HepG2 (cell line): ENCODE measurements at regions of chr10 and their contacts with region 1.

Region 1: GRCh38 chr10:122126763-122127659 is 138.0 kb downstream of the TACC2 start:
- DNase-seq: peak; percentile 30
- ATAC-seq: peak; percentile 56
- H3K4me3 ChIP-seq: no peak overlapping the region
- H3K27ac ChIP-seq: no peak overlapping the region
- H3K4me1 ChIP-seq: peaks cover 14% of the 10 kb centered on the region
- H3K27me3 ChIP-seq: no peaks in the 10 kb centered on the region; a peak in 1 of 5 replicates
- CTCF ChIP-seq: no peak
- EP300 ChIP-seq: no peak
- POLR2A ChIP-seq: no peak
- RAD21 ChIP-seq: no peak

Region 2: GRCh38 chr10:122152544-122152943 is 25.5 kb after region 1 on chr10:
- CTCF ChIA-PET with region 1: no interaction called
- POLR2A ChIA-PET with region 1: no interaction called
- in situ Hi-C with region 1: no loop called
- intact Hi-C with region 1: no loop called
- DNase-seq: no peak
- ATAC-seq: no peak
- H3K4me3 ChIP-seq: no peak overlapping the region
- H3K27ac ChIP-seq: no peak overlapping the region
- H3K4me1 ChIP-seq: peaks cover 2% of the 10 kb centered on the region
- H3K27me3 ChIP-seq: no peaks in the 10 kb centered on the region
- CTCF ChIP-seq: no peak
- EP300 ChIP-seq: no peak
- POLR2A ChIP-seq: no peak
- RAD21 ChIP-seq: no peak

Region 3: GRCh38 chr10:122191936-122192541 is 65.0 kb after region 1 on chr10:
- CTCF ChIA-PET with region 1: no interaction called
- POLR2A ChIA-PET with region 1: no interaction called
- in situ Hi-C with region 1: no loop called
- intact Hi-C with region 1: loop called (anchors 2 kb)
- DNase-seq: no peak
- ATAC-seq: no peak
- H3K4me3 ChIP-seq: no peak overlapping the region
- H3K27ac ChIP-seq: no peak overlapping the region
- H3K4me1 ChIP-seq: no peaks in the 10 kb centered on the region
- H3K27me3 ChIP-seq: no peaks in the 10 kb centered on the region
- CTCF ChIP-seq: no peak
- EP300 ChIP-seq: no peak
- POLR2A ChIP-seq: no peak
- RAD21 ChIP-seq: no peak